ENCODE measurements at regions of chr5 and their contacts with region 1.

Region 1: GRCh38 chr5:38265546-38266179 is 7.3 kb downstream of the EGFLAM start:
- DNase-seq: peak; percentile 34 to 54
- ATAC-seq: peak; percentile 66 to 84 (median 74)
- H3K4me3 ChIP-seq: peak overlapping the region; percentile 15
- H3K27ac ChIP-seq: no peak overlapping the region
- H3K4me1 ChIP-seq: no peaks in the 10 kb centered on the region
- H3K27me3 ChIP-seq: peaks cover 0 to 32% (median 0%) of the 10 kb centered on the region in 3 donors
- CTCF ChIP-seq: peak; percentile 78

Region 2: DNA sequence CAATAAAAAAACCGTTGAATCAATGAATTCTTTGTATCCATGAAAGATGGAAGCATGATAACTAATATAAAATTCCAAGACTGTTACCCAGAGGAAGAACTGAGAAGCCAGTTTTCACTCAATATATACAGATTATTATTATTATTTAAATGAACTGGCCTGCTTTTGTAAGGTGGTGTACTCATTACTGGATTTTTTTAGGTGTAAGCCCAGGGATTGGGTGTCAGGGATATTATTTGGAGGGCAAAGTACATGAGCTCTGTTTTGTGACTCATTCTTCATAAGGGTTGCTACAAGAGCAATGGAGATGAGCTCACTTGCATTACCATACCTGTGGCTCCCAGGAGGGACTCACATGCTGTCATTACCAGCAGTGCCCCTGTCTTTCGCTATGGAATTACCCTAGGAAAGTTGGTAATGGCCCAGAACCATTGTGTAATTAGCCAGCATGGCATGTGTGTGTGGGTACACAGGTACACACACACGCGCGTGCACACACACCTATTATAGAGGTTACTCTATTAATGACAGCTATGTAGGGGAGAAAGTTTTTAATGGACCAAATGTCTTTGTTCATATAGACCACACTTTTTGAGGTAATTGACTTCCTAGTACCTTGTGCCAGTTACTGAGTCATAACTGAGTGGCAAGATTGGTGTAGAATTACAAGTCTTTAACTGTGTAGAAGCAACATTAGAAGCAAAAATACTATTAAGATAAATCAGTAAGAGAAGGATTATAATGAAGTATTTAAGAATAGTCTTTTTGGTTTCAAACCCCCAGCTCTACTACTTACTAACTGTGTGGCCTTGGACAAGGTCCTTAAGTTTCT is 569.3 kb before region 1 on chr5:
- intact Hi-C with region 1: no loop called
- DNase-seq: no peak
- ATAC-seq: peak; percentile 95 to 98 (median 97)
- H3K4me3 ChIP-seq: no peak overlapping the region
- H3K27ac ChIP-seq: peak overlapping the region; percentile 84
- H3K4me1 ChIP-seq: peaks cover 14% of the 10 kb centered on the region
- H3K27me3 ChIP-seq: no peaks in the 10 kb centered on the region
- CTCF ChIP-seq: no peak

Region 3: DNA sequence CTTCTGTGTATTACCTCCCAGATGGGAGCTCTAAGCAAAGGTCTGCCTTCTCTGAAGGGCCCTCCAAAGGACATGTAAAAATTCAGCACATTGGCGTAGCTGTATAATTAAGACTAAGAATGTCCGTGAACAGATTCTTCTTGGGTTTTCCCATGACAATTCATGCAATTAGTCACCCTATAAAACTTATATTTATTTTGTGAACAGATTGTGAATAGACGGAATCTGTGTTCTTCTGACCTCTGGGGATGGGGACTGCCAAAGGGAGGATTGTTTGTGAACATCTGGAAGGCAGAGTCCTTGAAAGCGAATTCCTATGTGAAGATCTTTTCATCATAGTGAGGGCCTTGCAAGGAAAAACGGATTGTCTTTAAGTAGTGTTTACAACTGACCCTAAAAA is 104.0 kb after region 1 on chr5:
- intact Hi-C with region 1: loop called in 1 of 2 experiments (anchors 10 kb)
- DNase-seq: no peak
- ATAC-seq: no peak
- H3K4me3 ChIP-seq: no peak overlapping the region
- H3K27ac ChIP-seq: no peak overlapping the region
- H3K4me1 ChIP-seq: no peaks in the 10 kb centered on the region
- H3K27me3 ChIP-seq: peaks cover 0 to 3% (median 0%) of the 10 kb centered on the region in 3 donors
- CTCF ChIP-seq: no peak

Region 4: DNA sequence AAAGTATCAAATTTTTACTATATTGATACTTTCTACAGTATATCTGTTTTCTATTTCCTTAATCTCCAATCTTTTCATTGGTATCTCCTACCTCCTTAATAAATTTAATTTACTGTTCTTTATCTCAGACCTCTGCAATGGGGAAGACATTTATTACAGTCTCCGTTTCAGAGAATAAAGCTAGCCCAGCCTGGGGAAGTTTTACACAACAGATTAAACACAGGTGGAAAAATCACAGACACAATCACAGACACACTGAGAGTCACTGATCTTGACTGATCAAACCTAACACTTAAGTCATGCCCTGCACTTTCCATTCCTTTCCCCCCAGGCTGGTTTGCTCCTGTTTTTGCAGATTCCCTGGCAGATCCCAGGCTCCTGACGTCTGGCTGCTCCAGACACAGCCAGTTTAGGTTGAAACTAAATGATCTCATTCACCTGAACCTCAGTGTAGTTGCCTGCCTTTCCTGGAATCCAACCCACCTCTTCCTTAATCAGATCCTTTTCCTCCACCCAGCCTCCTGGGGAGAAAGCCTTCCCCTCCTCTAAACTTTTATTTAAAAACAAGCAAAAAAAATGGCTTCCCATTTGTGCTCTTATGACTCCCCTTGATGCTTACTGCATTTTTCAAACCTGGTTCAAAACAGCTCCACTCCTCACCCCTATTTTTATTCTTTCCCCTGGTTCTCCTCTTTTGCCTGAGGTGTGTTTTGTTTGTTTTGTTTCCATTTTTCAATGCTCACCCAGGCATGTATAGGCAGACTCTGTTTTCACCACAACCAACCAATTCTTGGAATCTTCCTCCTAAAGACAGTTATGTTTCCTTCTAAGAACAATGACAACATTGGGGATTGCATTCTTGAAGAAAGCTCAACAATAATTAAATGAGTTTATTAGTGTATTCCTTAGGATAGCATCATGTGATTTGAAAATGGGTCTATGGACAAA is 550.7 kb after region 1 on chr5:
- intact Hi-C with region 1: loop called in 1 of 2 experiments (anchors 5 kb)
- DNase-seq: no peak
- ATAC-seq: no peak
- H3K4me3 ChIP-seq: no peak overlapping the region
- H3K27ac ChIP-seq: no peak overlapping the region
- H3K4me1 ChIP-seq: no peaks in the 10 kb centered on the region
- H3K27me3 ChIP-seq: peaks cover 0 to 3% (median 0%) of the 10 kb centered on the region in 3 donors
- CTCF ChIP-seq: no peak

Region 5: DNA sequence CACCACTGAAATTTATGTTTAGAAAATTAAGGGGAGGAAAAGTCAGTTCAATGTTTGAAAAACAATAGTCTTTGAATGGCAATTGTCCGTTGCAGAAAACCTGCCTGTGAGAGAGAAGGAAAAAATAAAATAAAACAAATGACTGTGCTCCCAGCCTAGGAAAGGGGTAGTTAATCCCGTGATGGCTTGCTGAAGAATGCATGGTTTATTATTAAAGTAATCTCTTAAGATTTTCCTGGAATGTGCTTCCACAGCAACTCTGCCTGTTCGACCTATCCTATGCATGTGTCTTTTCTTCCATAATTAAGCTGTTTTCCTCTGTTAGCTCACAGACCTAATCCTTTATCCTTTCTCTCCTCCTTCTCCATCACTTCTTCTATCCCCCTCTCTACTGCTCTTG is 1161.6 kb after region 1 on chr5:
- intact Hi-C with region 1: no loop called
- DNase-seq: no peak
- ATAC-seq: no peak
- H3K4me3 ChIP-seq: no peak overlapping the region
- H3K27ac ChIP-seq: peak overlapping the region; percentile 14
- H3K4me1 ChIP-seq: peaks cover 12% of the 10 kb centered on the region
- H3K27me3 ChIP-seq: peaks cover 0 to 12% (median 3%) of the 10 kb centered on the region in 3 donors
- CTCF ChIP-seq: no peak